Dorsolateral prefrontal cortex (tissue), 120 donors: ENCODE measurements at regions of chr19 and their contacts with region 1.

Region 1: GRCh38 chr19:38229585-38230073 is 5.6 kb upstream of the DPF1 start:
- DNase-seq: peak; percentile 89 to 97 (median 96)
- H3K4me3 ChIP-seq: peak overlapping the region; percentile 51 to 80 (median 67)
- H3K27ac ChIP-seq: peak overlapping the region in 50 of 59 donors; percentile 13 to 91 (median 74)
- H3K27me3 ChIP-seq: peaks cover 0 to 5% (median 0%) of the 10 kb centered on the region in 45 donors
- CTCF ChIP-seq: peak in 47 of 56 donors; percentile 18 to 68 (median 41)

Region 2: DNA sequence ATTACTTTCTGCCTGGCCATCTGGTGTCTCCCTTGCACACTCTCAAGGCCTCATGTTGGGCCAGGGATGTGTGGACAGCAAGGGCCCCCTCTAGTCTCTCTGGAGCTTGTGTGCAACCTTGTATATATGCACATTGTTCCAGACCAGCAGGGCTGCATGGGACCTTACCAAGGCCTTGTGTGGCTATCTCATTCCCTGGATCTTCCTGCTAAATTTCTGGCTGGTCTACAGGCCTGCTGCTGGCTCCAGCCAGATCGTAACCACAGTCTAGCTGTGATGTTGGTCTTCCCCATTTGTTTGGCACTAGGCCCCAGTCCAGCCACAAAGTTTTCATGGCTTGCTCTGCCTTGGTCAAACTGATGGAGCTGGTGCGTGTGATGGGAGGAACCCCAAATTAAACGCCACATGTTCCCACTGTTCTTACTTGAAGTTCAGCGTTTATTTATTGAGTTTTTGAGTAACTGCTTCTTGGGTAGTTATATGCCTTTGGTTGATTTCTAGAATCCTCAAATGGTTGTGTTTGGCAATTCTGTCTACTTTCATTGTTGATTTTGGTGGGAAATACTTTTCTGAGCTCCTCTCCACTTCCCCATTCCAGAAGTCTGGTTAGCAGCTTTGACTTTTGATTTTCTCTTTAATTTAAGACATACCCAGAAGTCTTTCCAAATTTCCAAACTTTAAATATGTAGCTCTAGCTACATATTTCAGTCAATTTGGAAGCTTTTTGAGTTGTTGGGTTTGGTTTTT is 266.3 kb before region 1 on chr19:
- intact Hi-C with region 1: no loop called
- DNase-seq: no peak
- H3K4me3 ChIP-seq: no peak overlapping the region
- H3K27ac ChIP-seq: no peak overlapping the region
- H3K27me3 ChIP-seq: no peaks in the 10 kb centered on the region
- CTCF ChIP-seq: no peak

Region 3: DNA sequence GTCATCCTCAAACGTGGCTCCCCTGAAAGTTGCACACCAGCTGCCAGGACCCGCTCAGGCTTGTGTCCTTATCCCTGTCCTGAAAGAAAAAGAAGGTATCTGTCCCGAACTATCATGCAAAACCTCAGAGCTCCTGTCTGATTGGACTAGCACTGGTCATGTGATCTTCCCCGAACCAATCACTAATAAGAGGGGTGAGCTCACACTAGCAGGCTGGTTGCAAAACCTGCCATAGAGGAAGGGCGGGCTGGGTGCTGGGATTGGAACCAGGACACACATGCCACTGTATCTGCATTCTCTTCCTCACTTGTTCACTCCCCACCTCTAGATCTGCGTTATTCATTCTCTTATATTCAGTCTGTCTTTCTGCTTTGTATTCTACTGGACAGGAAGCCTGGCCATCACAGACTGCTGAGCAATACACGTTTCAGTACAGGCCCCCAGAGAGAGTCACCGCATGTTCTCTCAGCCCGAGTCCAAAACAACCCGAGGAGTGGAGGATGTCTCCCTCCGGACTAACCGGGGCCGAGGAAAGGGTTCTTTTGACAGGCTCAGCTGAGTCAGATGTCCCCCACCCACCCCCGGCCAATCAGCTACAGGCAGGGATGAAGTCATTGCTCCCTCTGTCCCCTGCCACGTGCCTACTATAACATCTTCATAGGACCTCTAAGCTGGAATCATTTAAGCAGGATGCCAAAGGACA is 225.0 kb before region 1 on chr19:
- intact Hi-C with region 1: no loop called
- DNase-seq: peak; percentile 71 to 97 (median 90)
- H3K4me3 ChIP-seq: peak overlapping the region; percentile 28 to 77 (median 61)
- H3K27ac ChIP-seq: peak overlapping the region; percentile 63 to 98 (median 93)
- H3K27me3 ChIP-seq: no peaks in the 10 kb centered on the region
- CTCF ChIP-seq: peak in 3 of 56 donors; percentile 13 to 17 (median 13)

Region 4: GRCh38 chr19:38142176-38143035 is 87.2 kb before region 1 on chr19:
- intact Hi-C with region 1: loop called (anchors 5 kb)
- DNase-seq: peak; percentile 45 to 88 (median 82)
- H3K4me3 ChIP-seq: no peak overlapping the region
- H3K27ac ChIP-seq: peak overlapping the region in 56 of 59 donors; percentile 39 to 95 (median 71)
- H3K27me3 ChIP-seq: no peaks in the 10 kb centered on the region
- CTCF ChIP-seq: peak; percentile 30 to 92 (median 79)

Region 5: GRCh38 chr19:38173291-38174041 is 56.2 kb before region 1 on chr19:
- intact Hi-C with region 1: loop called (anchors 5 kb)
- DNase-seq: peak; percentile 62 to 95 (median 92)
- H3K4me3 ChIP-seq: peak overlapping the region in 10 of 59 donors; percentile 3 to 36 (median 20)
- H3K27ac ChIP-seq: peak overlapping the region; percentile 19 to 91 (median 77)
- H3K27me3 ChIP-seq: no peaks in the 10 kb centered on the region
- CTCF ChIP-seq: peak in 3 of 56 donors; percentile 14 to 21 (median 20)